PC-9 (cell line): ENCODE measurements at regions of chr4 and their contacts with region 1.

Region 1: GRCh38 chr4:79576429-79576753 is 168.4 kb upstream of the GK2 start:
- DNase-seq: peak in 1 of 2 experiments; percentile 5
- H3K4me3 ChIP-seq: no peak overlapping the region
- H3K27ac ChIP-seq: no peak overlapping the region
- H3K4me1 ChIP-seq: no peaks in the 10 kb centered on the region
- H3K27me3 ChIP-seq: no peaks in the 10 kb centered on the region
- CTCF ChIP-seq: no peak; the same call in 1 of the 2 replicates

Region 2: GRCh38 chr4:78951862-78952472 is 624.4 kb before region 1 on chr4:
- CTCF ChIA-PET with region 1: no interaction called
- POLR2A ChIA-PET with region 1: no interaction called
- intact Hi-C with region 1: loop called (anchors 5 kb)
- DNase-seq: no peak
- H3K4me3 ChIP-seq: no peak overlapping the region
- H3K27ac ChIP-seq: no peak overlapping the region
- H3K4me1 ChIP-seq: no peaks in the 10 kb centered on the region
- H3K27me3 ChIP-seq: no peaks in the 10 kb centered on the region
- CTCF ChIP-seq: peak; percentile 77

Region 3: GRCh38 chr4:79042079-79042674 is 534.2 kb before region 1 on chr4:
- CTCF ChIA-PET with region 1: no interaction called
- POLR2A ChIA-PET with region 1: no interaction called
- intact Hi-C with region 1: loop called (anchors 1 kb)
- DNase-seq: peak in 1 of 2 experiments; percentile 5
- H3K4me3 ChIP-seq: no peak overlapping the region
- H3K27ac ChIP-seq: no peak overlapping the region
- H3K4me1 ChIP-seq: no peaks in the 10 kb centered on the region
- H3K27me3 ChIP-seq: no peaks in the 10 kb centered on the region
- CTCF ChIP-seq: peak; percentile 70

Region 4: GRCh38 chr4:79241846-79242245 is 334.5 kb before region 1 on chr4:
- CTCF ChIA-PET with region 1: no interaction called
- POLR2A ChIA-PET with region 1: no interaction called
- intact Hi-C with region 1: loop called (anchors 5 kb)
- DNase-seq: no peak
- H3K4me3 ChIP-seq: no peak overlapping the region
- H3K27ac ChIP-seq: no peak overlapping the region
- H3K4me1 ChIP-seq: no peaks in the 10 kb centered on the region
- H3K27me3 ChIP-seq: no peaks in the 10 kb centered on the region
- CTCF ChIP-seq: no peak

Region 5: GRCh38 chr4:79248610-79249009 is 327.8 kb before region 1 on chr4:
- CTCF ChIA-PET with region 1: interaction called, 11 read pairs
- POLR2A ChIA-PET with region 1: no interaction called
- intact Hi-C with region 1: loop called (anchors 5 kb)
- DNase-seq: no peak
- H3K4me3 ChIP-seq: no peak overlapping the region
- H3K27ac ChIP-seq: no peak overlapping the region
- H3K4me1 ChIP-seq: no peaks in the 10 kb centered on the region
- H3K27me3 ChIP-seq: no peaks in the 10 kb centered on the region
- CTCF ChIP-seq: no peak

Region 6: DNA sequence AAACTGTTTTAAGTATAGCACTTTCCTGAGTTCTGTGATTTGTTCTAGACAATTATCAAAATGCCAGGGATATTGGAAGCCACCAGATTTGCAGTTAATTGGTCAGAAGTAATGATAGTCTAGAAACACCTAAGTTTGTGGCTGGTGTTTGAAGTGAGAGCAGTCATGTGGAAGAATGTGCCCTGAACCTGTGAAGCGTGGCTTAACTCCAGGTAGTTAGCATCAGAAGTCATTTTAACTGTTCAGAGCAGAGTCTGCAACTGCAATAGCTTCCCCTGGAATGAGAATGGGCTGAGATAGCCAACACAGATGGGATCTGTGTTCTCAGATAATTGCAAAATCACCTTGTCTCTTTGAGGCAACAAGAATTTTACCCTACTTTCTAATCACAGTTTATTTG is 86.8 kb after region 1 on chr4:
- CTCF ChIA-PET with region 1: no interaction called
- POLR2A ChIA-PET with region 1: no interaction called
- intact Hi-C with region 1: no loop called
- DNase-seq: no peak
- H3K4me3 ChIP-seq: no peak overlapping the region
- H3K27ac ChIP-seq: no peak overlapping the region
- H3K4me1 ChIP-seq: no peaks in the 10 kb centered on the region
- H3K27me3 ChIP-seq: no peaks in the 10 kb centered on the region
- CTCF ChIP-seq: no peak